CD8-positive, alpha-beta T cell (primary cell): ENCODE measurements at regions of chrX and their contacts with region 1.

Region 1: GRCh38 chrX:54808605-54809483 is 1.3 kb downstream of the MAGED2 start:
- DNase-seq: peak; percentile 73 to 96 (median 85)
- ATAC-seq: peak; percentile 71
- H3K4me3 ChIP-seq: peak overlapping the region; percentile 92 to 96
- H3K4me3 Mint-ChIP-seq: peak overlapping the region; percentile 93
- H3K27ac ChIP-seq: peak overlapping the region; percentile 92
- H3K27ac Mint-ChIP-seq: peak overlapping the region; percentile 95
- H3K4me1 ChIP-seq: peaks cover 13% of the 10 kb centered on the region
- H3K4me1 Mint-ChIP-seq: peaks cover 21% of the 10 kb centered on the region
- H3K27me3 ChIP-seq: no peaks in the 10 kb centered on the region
- H3K27me3 Mint-ChIP-seq: no peaks in the 10 kb centered on the region
- CTCF ChIP-seq: no peak

Region 2: DNA sequence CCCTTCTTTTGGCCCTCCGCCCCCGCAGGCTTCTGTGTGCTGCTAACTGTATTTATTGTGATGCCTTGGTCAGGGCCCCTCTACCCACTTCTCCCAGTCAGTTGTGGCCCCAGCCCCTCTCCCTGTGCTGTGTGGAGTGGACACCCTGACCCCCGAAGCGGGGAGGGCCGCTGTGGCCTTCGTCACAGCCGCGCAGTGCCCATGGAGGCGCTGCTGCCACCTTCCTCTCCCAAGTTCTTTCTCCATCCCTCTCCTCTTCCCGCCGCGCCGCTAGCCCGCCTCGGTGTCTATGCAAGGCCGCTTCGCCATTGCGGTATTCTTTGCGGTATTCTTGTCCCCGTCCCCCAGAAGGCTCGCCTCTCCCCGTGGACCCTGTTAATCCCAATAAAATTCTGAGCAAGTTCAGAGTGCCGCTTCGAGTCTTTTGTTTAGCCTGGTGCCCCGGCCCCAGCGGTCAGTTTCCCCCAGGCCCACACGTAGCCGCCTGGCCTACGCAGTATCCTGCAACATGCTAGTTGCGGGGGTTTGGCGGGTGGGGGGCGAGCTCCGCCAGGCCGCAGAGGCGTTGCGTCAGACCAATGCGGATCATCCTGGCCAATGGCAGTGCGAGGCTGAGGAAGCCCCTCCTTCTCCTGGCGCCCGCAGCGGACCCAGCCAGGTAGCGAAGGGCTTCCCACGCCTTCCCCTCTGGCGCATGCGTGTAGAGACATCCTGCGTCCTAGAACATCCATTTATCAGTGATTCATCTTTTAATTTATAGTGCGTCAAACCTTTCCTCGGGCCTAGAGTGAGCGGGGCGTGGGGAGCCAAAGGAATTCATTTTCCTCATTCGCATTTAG is 1720.5 kb before region 1 on chrX:
- CTCF ChIA-PET with region 1: no interaction called
- POLR2A ChIA-PET with region 1: no interaction called
- intact Hi-C with region 1: loop called in 1 of 2 experiments (anchors 5 kb)
- DNase-seq: peak; percentile 61 to 93 (median 81)
- ATAC-seq: peak; percentile 67
- H3K4me3 ChIP-seq: peak overlapping the region; percentile 44 to 52
- H3K4me3 Mint-ChIP-seq: peak overlapping the region; percentile 92
- H3K27ac ChIP-seq: peak overlapping the region; percentile 92 to 93
- H3K27ac Mint-ChIP-seq: peak overlapping the region; percentile 99
- H3K4me1 ChIP-seq: peaks cover 26% of the 10 kb centered on the region
- H3K4me1 Mint-ChIP-seq: peaks cover 59% of the 10 kb centered on the region
- H3K27me3 ChIP-seq: no peaks in the 10 kb centered on the region
- H3K27me3 Mint-ChIP-seq: no peaks in the 10 kb centered on the region
- CTCF ChIP-seq: no peak

Region 3: DNA sequence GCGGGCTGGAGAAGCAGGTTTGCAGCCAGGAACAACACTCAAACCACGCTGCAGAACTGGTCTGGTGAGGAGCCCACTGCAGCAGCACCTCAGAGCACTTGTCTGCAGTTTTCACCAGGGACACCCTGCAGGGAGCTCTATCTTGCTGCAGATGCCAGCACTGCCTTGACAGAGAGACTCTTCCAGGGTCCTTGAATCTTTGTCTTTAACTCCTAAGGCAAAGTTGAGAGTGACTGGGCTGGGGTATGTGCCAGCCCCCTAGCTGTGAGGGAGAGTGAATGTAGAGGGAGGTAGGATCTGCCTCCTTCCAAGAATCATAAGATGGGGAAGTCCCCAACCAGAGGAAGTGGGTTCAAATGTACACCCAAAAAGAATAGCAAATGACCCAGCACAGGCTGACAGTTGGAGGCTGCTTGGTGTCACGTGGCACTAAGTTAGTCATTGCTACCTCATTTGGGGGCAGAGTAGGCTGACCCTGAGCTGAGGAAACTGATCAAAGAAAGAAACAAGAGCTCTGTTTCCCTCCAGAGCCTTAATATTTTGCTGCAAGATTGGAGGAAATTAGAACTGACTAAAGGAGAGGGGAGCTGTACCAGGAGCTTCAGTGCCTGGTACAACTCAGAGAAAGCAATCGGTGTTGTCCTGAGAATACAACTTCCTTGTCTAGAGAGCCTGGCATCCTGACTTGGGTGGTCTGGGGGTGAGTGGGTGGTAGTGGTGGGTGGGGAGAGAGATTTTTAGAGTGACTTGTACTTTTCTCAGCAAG is 1094.1 kb before region 1 on chrX:
- CTCF ChIA-PET with region 1: no interaction called
- POLR2A ChIA-PET with region 1: no interaction called
- intact Hi-C with region 1: loop called in 1 of 2 experiments (anchors 10 kb)
- DNase-seq: peak in 8 of 9 experiments; percentile 18 to 89 (median 60)
- ATAC-seq: peak; percentile 71
- H3K4me3 ChIP-seq: peak overlapping the region; percentile 30 to 32
- H3K4me3 Mint-ChIP-seq: peak overlapping the region; percentile 78
- H3K27ac ChIP-seq: peak overlapping the region; percentile 54 to 94
- H3K27ac Mint-ChIP-seq: peak overlapping the region; percentile 96
- H3K4me1 ChIP-seq: peaks cover 48% of the 10 kb centered on the region
- H3K4me1 Mint-ChIP-seq: peaks cover 48% of the 10 kb centered on the region
- H3K27me3 ChIP-seq: no peaks in the 10 kb centered on the region
- H3K27me3 Mint-ChIP-seq: no peaks in the 10 kb centered on the region
- CTCF ChIP-seq: no peak

Region 4: GRCh38 chrX:54182864-54183608 is 625.8 kb before region 1 on chrX and contains the start of gene FAM120C:
- CTCF ChIA-PET with region 1: no interaction called
- POLR2A ChIA-PET with region 1: interaction called, 3 read pairs
- intact Hi-C with region 1: loop called (anchors 2 to 5 kb)
- DNase-seq: peak; percentile 26 to 83 (median 59)
- ATAC-seq: peak; percentile 70
- H3K4me3 ChIP-seq: peak within 1 kb of the TSS; percentile 60 to 72
- H3K4me3 Mint-ChIP-seq: peak within 1 kb of the TSS; percentile 78
- H3K27ac ChIP-seq: peak within 1 kb of the TSS; percentile 75 to 83
- H3K27ac Mint-ChIP-seq: peak within 1 kb of the TSS; percentile 88
- H3K4me1 ChIP-seq: peaks cover 38% of the 10 kb centered on the region
- H3K4me1 Mint-ChIP-seq: peaks cover 43% of the 10 kb centered on the region
- H3K27me3 ChIP-seq: no peaks in the 10 kb centered on the region
- H3K27me3 Mint-ChIP-seq: no peaks in the 10 kb centered on the region
- CTCF ChIP-seq: no peak
- total RNA-seq, gene FAM120C: 10.9 to 11.1 TPM

Region 5: GRCh38 chrX:54529552-54530357 is 279.1 kb before region 1 on chrX and contains the start of gene GNL3L:
- CTCF ChIA-PET with region 1: no interaction called
- POLR2A ChIA-PET with region 1: no interaction called
- intact Hi-C with region 1: loop called (anchors 2 to 5 kb)
- DNase-seq: peak; percentile 55 to 89 (median 78)
- ATAC-seq: peak; percentile 83
- H3K4me3 ChIP-seq: peak within 1 kb of the TSS; percentile 85 to 95
- H3K4me3 Mint-ChIP-seq: peak within 1 kb of the TSS; percentile 97
- H3K27ac ChIP-seq: peak within 1 kb of the TSS; percentile 79 to 94
- H3K27ac Mint-ChIP-seq: peak within 1 kb of the TSS; percentile 97
- H3K4me1 ChIP-seq: peaks cover 22% of the 10 kb centered on the region
- H3K4me1 Mint-ChIP-seq: peaks cover 40% of the 10 kb centered on the region
- H3K27me3 ChIP-seq: no peaks in the 10 kb centered on the region
- H3K27me3 Mint-ChIP-seq: no peaks in the 10 kb centered on the region
- CTCF ChIP-seq: no peak
- total RNA-seq, gene GNL3L: 20.9 to 24.0 TPM

Region 6: DNA sequence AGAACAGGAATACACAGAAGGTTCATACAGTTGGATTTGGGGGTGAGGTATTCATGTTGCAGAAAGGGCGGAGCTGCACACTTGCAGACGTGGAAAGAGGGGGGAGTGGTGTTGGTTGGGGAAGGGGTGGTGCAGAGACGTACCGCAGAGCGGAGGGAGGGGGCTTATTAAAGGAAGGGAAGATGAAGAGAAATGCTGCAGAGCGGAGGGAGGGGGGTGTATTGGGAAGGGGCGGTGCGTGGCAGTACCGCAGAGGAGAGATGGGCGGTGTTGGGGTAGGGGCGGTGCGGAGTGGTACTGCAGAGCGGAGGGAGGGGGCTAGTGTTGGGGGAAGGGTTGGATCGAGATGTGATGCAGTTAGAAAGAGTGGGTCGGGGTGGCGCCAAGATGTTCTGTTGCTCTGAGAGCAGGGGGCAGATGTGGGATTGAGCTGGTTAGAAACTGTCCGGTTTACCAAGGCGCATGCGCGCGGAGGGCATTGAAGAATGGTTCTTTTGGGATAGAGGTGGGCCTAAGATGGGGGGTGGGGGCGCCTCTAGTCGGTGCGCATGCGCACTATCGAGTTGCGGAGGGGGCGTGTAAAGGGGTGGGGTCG is 112.7 kb after region 1 on chrX:
- CTCF ChIA-PET with region 1: no interaction called
- POLR2A ChIA-PET with region 1: no interaction called
- intact Hi-C with region 1: loop called in 1 of 2 experiments (anchors 5 kb)
- DNase-seq: peak in 8 of 9 experiments; percentile 26 to 73 (median 52)
- ATAC-seq: peak; percentile 77
- H3K4me3 ChIP-seq: peak overlapping the region; percentile 57 to 62
- H3K4me3 Mint-ChIP-seq: peak overlapping the region; percentile 85
- H3K27ac ChIP-seq: no peak overlapping the region
- H3K27ac Mint-ChIP-seq: no peak overlapping the region
- H3K4me1 ChIP-seq: no peaks in the 10 kb centered on the region
- H3K4me1 Mint-ChIP-seq: peaks cover 15% of the 10 kb centered on the region
- H3K27me3 ChIP-seq: no peaks in the 10 kb centered on the region
- H3K27me3 Mint-ChIP-seq: no peaks in the 10 kb centered on the region
- CTCF ChIP-seq: no peak